Panc1 (cell line): ENCODE measurements at regions of chr6 and their contacts with region 1.

Region 1: DNA sequence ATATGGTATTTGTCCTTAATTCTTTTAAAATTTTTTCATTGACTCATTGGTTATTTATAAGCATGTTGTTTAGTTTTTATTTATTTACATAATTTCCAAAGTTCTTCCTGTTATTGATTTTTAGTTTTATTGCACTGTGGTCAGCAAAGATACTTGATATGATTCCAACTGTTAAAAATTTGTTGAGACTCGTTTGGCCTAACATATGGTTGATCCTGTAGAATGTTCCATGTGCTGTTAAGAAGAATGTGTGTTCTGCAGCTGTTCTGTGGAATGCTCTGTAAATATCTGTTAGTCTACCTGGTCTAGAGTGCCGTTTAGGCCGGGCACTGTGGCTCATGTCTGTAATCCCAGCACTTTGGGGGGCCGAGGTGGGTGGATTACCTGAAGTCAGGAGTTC is 197.7 kb downstream of the CD109 start:
- DNase-seq: no peak
- ATAC-seq: no peak
- H3K4me3 ChIP-seq: no peak overlapping the region
- H3K27ac ChIP-seq: no peak overlapping the region
- H3K4me1 ChIP-seq: no peaks in the 10 kb centered on the region
- H3K27me3 ChIP-seq: no peaks in the 10 kb centered on the region
- CTCF ChIP-seq: no peak

Region 2: DNA sequence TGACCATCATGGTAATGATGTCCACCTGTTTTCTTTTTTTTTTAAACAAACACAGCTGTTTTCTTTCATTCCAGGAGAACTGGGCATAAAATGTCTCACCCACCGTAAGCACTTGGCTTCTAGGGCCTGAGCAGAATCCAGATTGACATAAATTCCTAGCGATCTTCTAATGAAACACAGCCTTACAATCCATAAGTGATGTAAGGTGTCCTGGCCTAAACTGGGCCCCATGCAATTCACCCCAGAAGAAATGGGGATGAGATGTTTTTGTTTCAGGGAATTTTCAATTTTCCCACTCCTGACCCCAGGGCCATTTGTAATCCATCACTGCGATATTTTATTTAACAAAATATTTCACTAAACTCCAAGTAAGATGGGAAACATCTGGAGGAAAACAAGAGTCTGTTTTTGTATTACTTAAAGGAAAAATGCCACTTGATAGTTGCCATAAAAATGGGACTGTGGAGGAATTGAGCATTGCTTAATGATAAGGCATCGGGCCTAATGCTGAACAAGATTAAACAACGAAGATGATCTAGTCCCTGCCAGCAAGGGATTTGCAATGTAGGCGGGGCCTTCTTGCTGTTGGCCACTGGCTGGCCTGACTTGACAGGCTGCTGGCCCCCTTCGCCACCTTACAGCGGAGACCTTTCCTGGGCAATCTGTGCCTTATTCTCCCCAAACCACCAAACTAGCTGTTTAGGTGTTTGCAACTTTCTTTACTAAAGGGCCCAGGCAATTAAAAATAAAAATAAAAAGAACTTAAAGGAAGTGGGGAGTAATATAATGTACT is 14.0 kb before region 1 on chr6:
- CTCF ChIA-PET with region 1: no interaction called
- POLR2A ChIA-PET with region 1: no interaction called
- in situ Hi-C with region 1: no loop called
- intact Hi-C with region 1: loop called (anchors 1 kb)
- DNase-seq: no peak
- ATAC-seq: no peak
- H3K4me3 ChIP-seq: no peak overlapping the region
- H3K27ac ChIP-seq: no peak overlapping the region
- H3K4me1 ChIP-seq: no peaks in the 10 kb centered on the region
- H3K27me3 ChIP-seq: no peaks in the 10 kb centered on the region
- CTCF ChIP-seq: no peak

Region 3: GRCh38 chr6:73969971-73970970 is 76.6 kb after region 1 on chr6:
- CTCF ChIA-PET with region 1: no interaction called
- POLR2A ChIA-PET with region 1: no interaction called
- in situ Hi-C with region 1: no loop called
- intact Hi-C with region 1: no loop called
- DNase-seq: peak; percentile 35
- ATAC-seq: peak; percentile 81
- H3K4me3 ChIP-seq: no peak overlapping the region
- H3K27ac ChIP-seq: peak overlapping the region; percentile 45; the same call in 1 of the 2 replicates
- H3K4me1 ChIP-seq: no peaks in the 10 kb centered on the region
- H3K27me3 ChIP-seq: no peaks in the 10 kb centered on the region
- CTCF ChIP-seq: peak; percentile 77; the same call in 1 of the 2 replicates

Region 4: DNA sequence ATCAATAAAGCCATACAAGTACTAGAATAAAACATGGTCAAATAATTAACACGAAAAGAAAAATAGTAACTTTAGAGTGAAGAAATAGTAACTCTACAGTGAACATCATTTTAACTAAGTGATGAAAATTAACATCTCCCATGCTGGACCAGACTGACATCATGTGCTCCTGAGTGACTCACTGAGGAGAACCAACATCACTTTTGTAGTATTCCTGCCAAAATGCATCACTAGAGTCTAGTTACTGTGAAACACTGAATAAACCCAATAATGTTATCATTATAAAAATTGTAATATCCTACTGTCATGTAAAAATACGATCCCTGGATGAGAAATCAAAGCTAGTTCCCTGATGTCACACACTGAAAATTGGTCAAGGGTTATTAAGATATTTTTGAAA is 163.6 kb after region 1 on chr6:
- CTCF ChIA-PET with region 1: no interaction called
- POLR2A ChIA-PET with region 1: no interaction called
- in situ Hi-C with region 1: no loop called
- intact Hi-C with region 1: no loop called
- DNase-seq: no peak
- ATAC-seq: no peak
- H3K4me3 ChIP-seq: no peak overlapping the region
- H3K27ac ChIP-seq: no peak overlapping the region
- H3K4me1 ChIP-seq: no peaks in the 10 kb centered on the region
- H3K27me3 ChIP-seq: no peaks in the 10 kb centered on the region
- CTCF ChIP-seq: no peak